Dorsolateral prefrontal cortex (tissue), 120 donors: ENCODE measurements at regions of chr18 and their contacts with region 1.

Region 1: GRCh38 chr18:7711495-7711894 is 144.4 kb downstream of the PTPRM start:
- DNase-seq: no peak
- H3K4me3 ChIP-seq: no peak overlapping the region
- H3K27ac ChIP-seq: no peak overlapping the region
- H3K27me3 ChIP-seq: peaks cover 0 to 3% (median 0%) of the 10 kb centered on the region in 45 donors
- CTCF ChIP-seq: no peak

Region 2: GRCh38 chr18:7658712-7659111 is 52.8 kb before region 1 on chr18:
- intact Hi-C with region 1: loop called in 1 of 2 experiments (anchors 10 kb)
- DNase-seq: no peak
- H3K4me3 ChIP-seq: no peak overlapping the region
- H3K27ac ChIP-seq: no peak overlapping the region
- H3K27me3 ChIP-seq: no peaks in the 10 kb centered on the region
- CTCF ChIP-seq: no peak